ENCODE measurements at regions of chr19 and their contacts with region 1.

Region 1: GRCh38 chr19:14363183-14364097 is 17.8 kb upstream of the ADGRE5 start:
- DNase-seq: peak in 2 of 3 donors; percentile 27 to 45
- H3K4me3 ChIP-seq: peak overlapping the region; percentile 21 to 76 (median 52)
- H3K4me3 Mint-ChIP-seq: peak overlapping the region; percentile 76 to 88
- H3K27ac ChIP-seq: peak overlapping the region; percentile 38 to 50
- H3K27ac Mint-ChIP-seq: peak overlapping the region; percentile 13 to 89 (median 80)
- H3K4me1 ChIP-seq: peaks cover 51 to 53% of the 10 kb centered on the region in 2 donors
- H3K4me1 Mint-ChIP-seq: peaks cover 55% of the 10 kb centered on the region
- H3K27me3 ChIP-seq: no peaks in the 10 kb centered on the region
- H3K27me3 Mint-ChIP-seq: peaks cover 0 to 5% (median 3%) of the 10 kb centered on the region in 3 donors
- CTCF ChIP-seq: no peak

Region 2: GRCh38 chr19:14393329-14393728 is 29.9 kb after region 1 on chr19:
- intact Hi-C with region 1: loop called in 1 of 2 experiments (anchors 5 kb)
- DNase-seq: no peak
- H3K4me3 ChIP-seq: no peak overlapping the region
- H3K4me3 Mint-ChIP-seq: no peak overlapping the region
- H3K27ac ChIP-seq: no peak overlapping the region
- H3K27ac Mint-ChIP-seq: peak overlapping the region in 2 of 7 donors; percentile 19 to 28
- H3K4me1 ChIP-seq: peaks cover 6% of the 10 kb centered on the region in 2 donors
- H3K4me1 Mint-ChIP-seq: peaks cover 12% of the 10 kb centered on the region
- H3K27me3 ChIP-seq: no peaks in the 10 kb centered on the region
- H3K27me3 Mint-ChIP-seq: peaks cover 0 to 3% (median 0%) of the 10 kb centered on the region in 3 donors
- CTCF ChIP-seq: no peak

Region 3: GRCh38 chr19:14405758-14406644 is 42.6 kb after region 1 on chr19:
- intact Hi-C with region 1: loop called (anchors 5 kb)
- DNase-seq: peak; percentile 82 to 89 (median 87)
- H3K4me3 ChIP-seq: peak overlapping the region in 1 of 3 experiments; percentile 48
- H3K4me3 Mint-ChIP-seq: peak overlapping the region; percentile 47 to 53
- H3K27ac ChIP-seq: peak overlapping the region; percentile 45 to 52
- H3K27ac Mint-ChIP-seq: peak overlapping the region; percentile 10 to 86 (median 79)
- H3K4me1 ChIP-seq: peaks cover 22 to 26% of the 10 kb centered on the region in 2 donors
- H3K4me1 Mint-ChIP-seq: peaks cover 21% of the 10 kb centered on the region
- H3K27me3 ChIP-seq: no peaks in the 10 kb centered on the region
- H3K27me3 Mint-ChIP-seq: peaks cover 0 to 2% (median 0%) of the 10 kb centered on the region in 3 donors
- CTCF ChIP-seq: peak; percentile 96